Gastrocnemius medialis (tissue), 4 donors: ENCODE measurements at regions of chr19 and their contacts with region 1.

Region 1: GRCh38 chr19:18349524-18350128 is 9.2 kb downstream of the PGPEP1 start:
- DNase-seq: peak in 1 of 2 donors; percentile 33
- ATAC-seq: no peak
- H3K4me3 ChIP-seq: no peak overlapping the region
- H3K27ac ChIP-seq: no peak overlapping the region
- H3K4me1 ChIP-seq: peaks cover 2% of the 10 kb centered on the region in 2 donors
- H3K27me3 ChIP-seq: no peaks in the 10 kb centered on the region
- CTCF ChIP-seq: peak; percentile 64 to 76 (median 65)
- POLR2A ChIP-seq: no peak

Region 2: GRCh38 chr19:18388100-18388959 is 38.7 kb after region 1 on chr19:
- in situ Hi-C with region 1: no loop called
- intact Hi-C with region 1: loop called (anchors 5 kb)
- DNase-seq: peak; percentile 49 to 74
- ATAC-seq: peak; percentile 77 to 86
- H3K4me3 ChIP-seq: peak overlapping the region; percentile 37 to 50 (median 48)
- H3K27ac ChIP-seq: peak overlapping the region; percentile 42 to 54 (median 49)
- H3K4me1 ChIP-seq: peaks cover 0 to 9% of the 10 kb centered on the region in 2 donors
- H3K27me3 ChIP-seq: peaks cover 0 to 11% (median 0%) of the 10 kb centered on the region in 3 donors
- CTCF ChIP-seq: peak; percentile 96 to 100 (median 99)
- POLR2A ChIP-seq: peak in 1 of 2 donors; percentile 15

Region 3: DNA sequence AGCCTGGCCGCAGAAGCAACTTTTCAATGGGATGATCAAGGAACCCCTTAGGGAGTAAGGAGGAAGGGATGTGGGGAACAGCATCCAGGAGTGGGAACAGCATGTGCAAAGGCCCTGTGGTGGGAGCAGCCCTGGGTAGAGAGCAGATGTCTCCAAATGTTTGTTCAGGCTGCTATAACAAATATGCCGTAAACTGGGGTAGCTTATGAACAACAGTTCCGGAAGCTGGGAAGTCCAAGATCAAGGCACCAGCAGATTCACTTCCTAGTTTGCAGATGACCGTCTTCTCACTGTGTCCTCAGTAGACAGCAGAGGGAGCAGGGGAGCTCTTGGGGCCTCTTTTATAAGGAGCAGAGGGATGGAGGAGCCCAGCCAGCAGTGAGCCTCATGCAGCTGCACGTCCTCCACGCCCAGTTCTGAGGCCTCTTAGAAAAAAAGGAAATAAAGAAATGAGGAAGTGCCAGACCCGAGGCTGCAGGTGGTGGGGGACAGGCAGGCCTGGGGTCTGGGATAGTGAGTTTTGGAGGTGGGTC is 52.0 kb after region 1 on chr19:
- in situ Hi-C with region 1: loop called (anchors 5 to 10 kb)
- intact Hi-C with region 1: no loop called
- DNase-seq: peak; percentile 63 to 68
- ATAC-seq: peak; percentile 55 to 76
- H3K4me3 ChIP-seq: no peak overlapping the region
- H3K27ac ChIP-seq: no peak overlapping the region
- H3K4me1 ChIP-seq: peaks cover 0 to 3% of the 10 kb centered on the region in 2 donors
- H3K27me3 ChIP-seq: no peaks in the 10 kb centered on the region
- CTCF ChIP-seq: peak in 1 of 5 experiments; percentile 21
- POLR2A ChIP-seq: no peak

Region 4: GRCh38 chr19:18408053-18408476 is 58.4 kb after region 1 on chr19:
- in situ Hi-C with region 1: loop called (anchors 5 to 10 kb)
- intact Hi-C with region 1: loop called (anchors 1 kb)
- DNase-seq: no peak
- ATAC-seq: peak in 1 of 2 donors; percentile 21
- H3K4me3 ChIP-seq: no peak overlapping the region
- H3K27ac ChIP-seq: no peak overlapping the region
- H3K4me1 ChIP-seq: no peaks in the 10 kb centered on the region
- H3K27me3 ChIP-seq: no peaks in the 10 kb centered on the region
- CTCF ChIP-seq: peak in 3 of 5 experiments; percentile 15 to 40 (median 36)
- POLR2A ChIP-seq: no peak